Activated CD4-positive, alpha-beta T cell treated with anti-CD3 and anti-CD28 coated beads for 36 hours (primary cell): ENCODE measurements at regions of chr22 and their contacts with region 1.

Region 1: GRCh38 chr22:46604306-46604690 is 15.9 kb upstream of the GRAMD4 start:
- DNase-seq: peak; percentile 91
- ATAC-seq: peak; percentile 99
- H3K4me3 Mint-ChIP-seq: peak overlapping the region; percentile 64
- H3K27ac Mint-ChIP-seq: peak overlapping the region; percentile 99
- H3K4me1 Mint-ChIP-seq: peaks cover 16% of the 10 kb centered on the region
- H3K27me3 Mint-ChIP-seq: no peaks in the 10 kb centered on the region

Region 2: GRCh38 chr22:46592390-46592872 is 11.9 kb before region 1 on chr22:
- CTCF ChIA-PET with region 1: no interaction called
- POLR2A ChIA-PET with region 1: no interaction called
- intact Hi-C with region 1: loop called in 1 of 2 experiments (anchors 1 kb)
- DNase-seq: peak; percentile 80
- ATAC-seq: peak; percentile 77
- H3K4me3 Mint-ChIP-seq: peak overlapping the region; percentile 47
- H3K27ac Mint-ChIP-seq: peak overlapping the region; percentile 85
- H3K4me1 Mint-ChIP-seq: peaks cover 25% of the 10 kb centered on the region
- H3K27me3 Mint-ChIP-seq: no peaks in the 10 kb centered on the region